Natural killer cell (primary cell): ENCODE measurements at regions of chr5 and their contacts with region 1.

Region 1: GRCh38 chr5:134586866-134587524 is 45.6 kb downstream of the SAR1B start:
- DNase-seq: peak; percentile 77 to 84
- ATAC-seq: peak; percentile 85 to 92 (median 88)
- H3K4me3 ChIP-seq: no peak overlapping the region
- H3K4me3 Mint-ChIP-seq: no peak overlapping the region
- H3K27ac ChIP-seq: no peak overlapping the region
- H3K27ac Mint-ChIP-seq: peak overlapping the region in 1 of 2 donors; percentile 51
- H3K4me1 ChIP-seq: peaks cover 4% of the 10 kb centered on the region
- H3K4me1 Mint-ChIP-seq: peaks cover 5 to 6% of the 10 kb centered on the region in 2 donors
- H3K27me3 ChIP-seq: no peaks in the 10 kb centered on the region
- H3K27me3 Mint-ChIP-seq: no peaks in the 10 kb centered on the region
- CTCF ChIP-seq: peak; percentile 97

Region 2: DNA sequence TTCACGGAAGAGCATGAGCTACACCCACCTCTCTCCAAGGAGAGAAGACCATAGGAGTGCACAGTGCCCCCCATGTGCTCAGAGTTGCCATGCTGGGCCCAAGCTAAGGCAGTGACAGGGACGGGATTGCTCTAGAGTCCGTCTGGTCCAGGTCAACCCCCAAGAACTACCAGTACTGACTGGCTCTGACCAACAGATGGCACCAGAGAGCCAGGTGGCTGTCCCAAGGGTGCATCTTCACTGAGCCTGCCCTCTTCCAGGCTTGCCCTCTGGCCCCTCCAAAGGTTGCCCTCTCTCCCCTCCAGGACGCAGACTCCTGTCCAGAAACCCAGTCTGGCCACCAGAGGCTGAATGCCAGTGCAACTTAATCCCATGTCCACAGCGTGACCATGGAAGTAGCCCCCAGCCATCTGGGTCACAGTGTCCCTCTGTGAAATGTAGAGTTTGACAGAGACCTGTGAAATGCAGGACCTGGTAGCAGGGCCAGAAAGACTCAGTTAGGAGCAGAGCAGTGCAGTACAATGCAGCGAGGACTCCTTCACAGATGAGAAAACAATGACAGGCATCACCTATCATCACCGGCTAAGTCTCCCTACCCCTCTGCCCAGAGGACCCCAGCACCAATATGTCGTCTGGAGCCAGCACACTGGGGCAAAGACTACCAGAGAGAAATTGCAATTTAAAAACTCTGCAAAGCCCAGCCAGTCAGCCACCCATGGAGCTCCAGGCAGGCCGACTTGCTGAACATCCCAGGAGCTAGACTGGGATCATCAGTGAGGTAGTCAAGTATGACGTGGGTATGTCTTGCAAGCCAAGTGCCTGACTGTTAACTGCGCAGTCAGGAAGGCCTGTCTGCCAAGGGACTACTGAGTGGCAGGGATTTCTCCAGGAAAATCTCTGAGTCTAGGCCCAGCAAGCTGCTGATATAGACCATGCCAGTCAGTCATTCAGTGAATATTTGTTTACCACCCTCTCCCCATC is 402.6 kb before region 1 on chr5:
- intact Hi-C with region 1: loop called (anchors 1 kb)
- DNase-seq: peak; percentile 70 to 90
- ATAC-seq: peak; percentile 94 to 100 (median 94)
- H3K4me3 ChIP-seq: no peak overlapping the region
- H3K4me3 Mint-ChIP-seq: no peak overlapping the region
- H3K27ac ChIP-seq: no peak overlapping the region
- H3K27ac Mint-ChIP-seq: no peak overlapping the region
- H3K4me1 ChIP-seq: no peaks in the 10 kb centered on the region
- H3K4me1 Mint-ChIP-seq: no peaks in the 10 kb centered on the region
- H3K27me3 ChIP-seq: no peaks in the 10 kb centered on the region
- H3K27me3 Mint-ChIP-seq: no peaks in the 10 kb centered on the region
- CTCF ChIP-seq: peak; percentile 95

Region 3: DNA sequence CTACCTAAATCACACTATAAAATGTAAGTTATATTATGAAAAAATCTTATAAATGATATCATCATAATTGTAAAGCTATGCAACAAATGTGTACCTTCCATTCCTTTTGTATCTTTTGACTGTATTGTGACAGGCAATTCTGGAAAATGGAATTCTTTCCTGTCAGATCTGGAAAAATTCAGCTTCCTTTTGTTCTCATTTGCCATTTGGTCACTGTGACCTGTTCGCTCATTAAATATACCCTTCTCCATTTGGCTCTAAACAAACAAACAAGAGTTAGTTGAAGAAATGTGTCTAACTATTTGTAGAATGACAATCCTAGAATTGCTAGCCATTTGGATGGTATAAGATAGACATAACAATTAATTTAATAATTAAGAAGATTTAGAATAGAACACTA is 282.7 kb before region 1 on chr5:
- intact Hi-C with region 1: loop called (anchors 2 kb)
- DNase-seq: no peak
- ATAC-seq: no peak
- H3K4me3 ChIP-seq: no peak overlapping the region
- H3K4me3 Mint-ChIP-seq: no peak overlapping the region
- H3K27ac ChIP-seq: no peak overlapping the region
- H3K27ac Mint-ChIP-seq: no peak overlapping the region
- H3K4me1 ChIP-seq: no peaks in the 10 kb centered on the region
- H3K4me1 Mint-ChIP-seq: no peaks in the 10 kb centered on the region
- H3K27me3 ChIP-seq: no peaks in the 10 kb centered on the region
- H3K27me3 Mint-ChIP-seq: peaks cover 0 to 2% of the 10 kb centered on the region in 2 donors
- CTCF ChIP-seq: no peak

Region 4: DNA sequence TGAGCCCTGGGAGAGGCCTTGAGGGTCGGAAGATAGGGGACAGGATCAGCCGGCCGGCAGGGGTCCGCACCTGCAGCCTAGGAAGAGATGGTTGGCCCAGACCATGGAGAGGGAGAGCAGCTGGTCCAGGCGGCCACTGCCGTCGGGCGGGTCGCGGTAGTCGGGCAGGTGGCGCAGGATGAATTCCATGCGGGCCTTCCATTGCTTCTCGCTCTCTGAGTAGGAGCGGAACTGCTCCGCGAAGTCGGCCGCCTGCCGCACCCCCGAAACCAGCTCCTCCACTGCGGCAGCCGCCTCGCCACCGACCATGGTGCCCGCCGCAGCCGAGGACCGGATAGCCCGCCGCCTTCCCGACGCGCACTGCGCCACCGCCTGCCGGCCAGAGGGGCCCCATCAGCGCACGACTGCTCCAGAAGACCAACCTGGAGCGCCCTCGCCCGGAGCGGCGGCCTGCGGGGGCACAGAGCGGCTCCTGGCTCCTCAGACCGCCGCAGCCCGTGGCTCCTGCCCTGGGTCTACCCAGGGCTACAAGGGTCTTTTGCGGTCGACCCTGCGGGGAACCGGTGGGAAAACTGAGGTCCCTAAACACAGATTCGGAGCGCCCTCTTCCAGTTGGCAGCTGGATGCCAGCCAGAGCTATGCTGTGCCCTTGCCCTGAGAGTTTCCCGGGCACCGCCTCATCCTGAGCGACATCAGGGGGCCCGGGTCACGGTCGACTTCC is 175.3 kb before region 1 on chr5 and contains the start of gene CDKN2AIPNL:
- intact Hi-C with region 1: loop called (anchors 2 kb)
- DNase-seq: peak; percentile 88 to 94
- ATAC-seq: peak; percentile 99 to 100 (median 99)
- H3K4me3 ChIP-seq: peak within 1 kb of the TSS; percentile 93
- H3K4me3 Mint-ChIP-seq: peak within 1 kb of the TSS; percentile 95
- H3K27ac ChIP-seq: peak within 1 kb of the TSS; percentile 80
- H3K27ac Mint-ChIP-seq: peak within 1 kb of the TSS; percentile 85 to 92
- H3K4me1 ChIP-seq: peaks cover 23% of the 10 kb centered on the region
- H3K4me1 Mint-ChIP-seq: peaks cover 20 to 26% of the 10 kb centered on the region in 2 donors
- H3K27me3 ChIP-seq: no peaks in the 10 kb centered on the region
- H3K27me3 Mint-ChIP-seq: no peaks in the 10 kb centered on the region
- CTCF ChIP-seq: peak; percentile 75
- total RNA-seq, gene CDKN2AIPNL: 12.3 to 15.5 (median 13.4) TPM